ENCODE measurements at regions of chr16 and their contacts with region 1.

Region 1: GRCh38 chr16:77171745-77172635 is 19.0 kb upstream of the MON1B start:
- DNase-seq: no peak
- H3K4me3 ChIP-seq: no peak overlapping the region
- H3K27ac ChIP-seq: no peak overlapping the region
- H3K4me1 ChIP-seq: no peaks in the 10 kb centered on the region
- H3K27me3 ChIP-seq: no peaks in the 10 kb centered on the region
- CTCF ChIP-seq: peak in 2 of 3 experiments; percentile 68 to 69; a peak in 3 of 4 replicates
- EP300 ChIP-seq: no peak
- POLR2A ChIP-seq: no peak
- RAD21 ChIP-seq: peak; percentile 85 to 90

Region 2: DNA sequence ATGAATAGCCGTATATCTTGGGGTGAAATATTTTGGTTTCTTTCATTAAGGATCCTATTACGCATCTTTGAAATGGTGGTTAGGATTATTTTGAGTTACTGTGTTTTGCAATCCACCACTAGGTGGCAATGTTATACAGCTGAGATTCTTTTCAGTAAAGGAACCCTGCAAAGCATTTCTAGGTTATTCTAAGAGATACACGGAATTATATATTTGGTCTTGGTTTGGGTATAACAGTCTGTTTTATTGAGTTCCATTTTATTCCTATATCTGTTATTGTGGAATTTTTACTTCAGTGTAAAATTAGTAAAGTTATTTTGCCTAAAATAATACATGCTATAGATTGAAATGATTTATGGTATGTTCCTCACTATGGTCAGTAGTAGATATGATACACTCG is 1382.8 kb before region 1 on chr16:
- CTCF ChIA-PET with region 1: interaction called, 13 read pairs
- POLR2A ChIA-PET with region 1: no interaction called
- DNase-seq: no peak
- H3K4me3 ChIP-seq: no peak overlapping the region
- H3K27ac ChIP-seq: no peak overlapping the region
- H3K4me1 ChIP-seq: no peaks in the 10 kb centered on the region
- H3K27me3 ChIP-seq: no peaks in the 10 kb centered on the region; a peak in 1 of 7 replicates
- CTCF ChIP-seq: peak in 2 of 3 experiments; percentile 40 to 66; a peak in 2 of 4 replicates
- EP300 ChIP-seq: no peak
- POLR2A ChIP-seq: no peak
- RAD21 ChIP-seq: peak; percentile 89 to 90

Region 3: GRCh38 chr16:76668207-76668725 is 503.7 kb before region 1 on chr16:
- CTCF ChIA-PET with region 1: interaction called, 46 read pairs
- POLR2A ChIA-PET with region 1: no interaction called
- DNase-seq: no peak
- H3K4me3 ChIP-seq: no peak overlapping the region
- H3K27ac ChIP-seq: no peak overlapping the region
- H3K4me1 ChIP-seq: no peaks in the 10 kb centered on the region
- H3K27me3 ChIP-seq: no peaks in the 10 kb centered on the region
- CTCF ChIP-seq: peak; percentile 27 to 66 (median 65)
- EP300 ChIP-seq: no peak
- POLR2A ChIP-seq: no peak
- RAD21 ChIP-seq: peak; percentile 86 to 90

Region 4: GRCh38 chr16:76824221-76824620 is 347.8 kb before region 1 on chr16:
- CTCF ChIA-PET with region 1: interaction called, 13 read pairs
- POLR2A ChIA-PET with region 1: no interaction called
- DNase-seq: no peak
- H3K4me3 ChIP-seq: no peak overlapping the region
- H3K27ac ChIP-seq: no peak overlapping the region
- H3K4me1 ChIP-seq: no peaks in the 10 kb centered on the region
- H3K27me3 ChIP-seq: no peaks in the 10 kb centered on the region
- CTCF ChIP-seq: no peak
- EP300 ChIP-seq: no peak
- POLR2A ChIP-seq: no peak
- RAD21 ChIP-seq: no peak

Region 5: GRCh38 chr16:77033516-77033915 is 138.5 kb before region 1 on chr16:
- CTCF ChIA-PET with region 1: interaction called, 15 read pairs
- POLR2A ChIA-PET with region 1: no interaction called
- DNase-seq: no peak
- H3K4me3 ChIP-seq: no peak overlapping the region
- H3K27ac ChIP-seq: no peak overlapping the region
- H3K4me1 ChIP-seq: peaks cover 0 to 4% (median 0%) of the 10 kb centered on the region in 4 experiments; a peak in 1 of 7 replicates
- H3K27me3 ChIP-seq: no peaks in the 10 kb centered on the region
- CTCF ChIP-seq: no peak
- EP300 ChIP-seq: no peak
- POLR2A ChIP-seq: no peak
- RAD21 ChIP-seq: no peak

Region 6: DNA sequence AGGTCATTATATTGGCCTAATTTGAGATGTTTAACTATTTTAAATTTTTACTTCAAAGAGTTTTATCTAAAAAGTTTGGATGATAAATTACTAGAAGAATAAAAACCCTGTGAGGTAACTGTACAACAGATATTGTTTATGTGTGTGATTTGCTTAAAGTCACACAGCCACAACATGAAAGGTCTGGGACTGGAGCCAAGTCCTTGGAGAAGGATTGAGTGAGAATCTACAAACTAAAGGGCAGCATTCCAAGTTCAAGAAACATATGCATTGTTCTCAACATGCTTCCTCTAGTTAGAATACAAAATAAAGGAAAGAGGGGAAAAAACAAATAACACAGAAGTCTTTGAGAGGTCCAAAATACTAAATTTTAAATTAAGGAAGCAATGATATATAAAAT is 112.5 kb before region 1 on chr16:
- CTCF ChIA-PET with region 1: interaction called, 11 read pairs
- POLR2A ChIA-PET with region 1: no interaction called
- DNase-seq: no peak
- H3K4me3 ChIP-seq: no peak overlapping the region
- H3K27ac ChIP-seq: no peak overlapping the region
- H3K4me1 ChIP-seq: peaks cover 0 to 10% (median 7%) of the 10 kb centered on the region in 4 experiments; a peak in 5 of 7 replicates
- H3K27me3 ChIP-seq: no peaks in the 10 kb centered on the region
- CTCF ChIP-seq: no peak
- EP300 ChIP-seq: no peak
- POLR2A ChIP-seq: no peak
- RAD21 ChIP-seq: no peak

Region 7: GRCh38 chr16:77157346-77158058 is 14.5 kb before region 1 on chr16:
- CTCF ChIA-PET with region 1: interaction called, 34 read pairs
- POLR2A ChIA-PET with region 1: no interaction called
- DNase-seq: no peak
- H3K4me3 ChIP-seq: no peak overlapping the region
- H3K27ac ChIP-seq: no peak overlapping the region
- H3K4me1 ChIP-seq: no peaks in the 10 kb centered on the region
- H3K27me3 ChIP-seq: no peaks in the 10 kb centered on the region
- CTCF ChIP-seq: no peak
- EP300 ChIP-seq: no peak
- POLR2A ChIP-seq: no peak
- RAD21 ChIP-seq: no peak

Region 8: GRCh38 chr16:77236063-77236511 is 64.1 kb after region 1 on chr16:
- CTCF ChIA-PET with region 1: no interaction called
- POLR2A ChIA-PET with region 1: no interaction called
- DNase-seq: peak; percentile 79 to 98
- H3K4me3 ChIP-seq: no peak overlapping the region
- H3K27ac ChIP-seq: no peak overlapping the region
- H3K4me1 ChIP-seq: peaks cover 0 to 11% (median 7%) of the 10 kb centered on the region in 4 experiments; a peak in 4 of 7 replicates
- H3K27me3 ChIP-seq: no peaks in the 10 kb centered on the region; a peak in 1 of 7 replicates
- CTCF ChIP-seq: peak; percentile 99 to 100 (median 100)
- EP300 ChIP-seq: peak in 1 of 2 experiments; percentile 44; a peak in 1 of 3 replicates
- POLR2A ChIP-seq: no peak
- RAD21 ChIP-seq: peak; percentile 100

Region 9: GRCh38 chr16:77327717-77328116 is 155.7 kb after region 1 on chr16:
- CTCF ChIA-PET with region 1: no interaction called
- POLR2A ChIA-PET with region 1: no interaction called
- DNase-seq: no peak
- H3K4me3 ChIP-seq: no peak overlapping the region
- H3K27ac ChIP-seq: no peak overlapping the region
- H3K4me1 ChIP-seq: peaks cover 0 to 7% (median 4%) of the 10 kb centered on the region in 4 experiments; a peak in 2 of 7 replicates
- H3K27me3 ChIP-seq: no peaks in the 10 kb centered on the region
- CTCF ChIP-seq: no peak
- EP300 ChIP-seq: no peak
- POLR2A ChIP-seq: no peak
- RAD21 ChIP-seq: no peak

Measured in H1 (cell line).